Aorta (tissue), 5 donors: ENCODE measurements at regions of chrX and their contacts with region 1.

Region 1: DNA sequence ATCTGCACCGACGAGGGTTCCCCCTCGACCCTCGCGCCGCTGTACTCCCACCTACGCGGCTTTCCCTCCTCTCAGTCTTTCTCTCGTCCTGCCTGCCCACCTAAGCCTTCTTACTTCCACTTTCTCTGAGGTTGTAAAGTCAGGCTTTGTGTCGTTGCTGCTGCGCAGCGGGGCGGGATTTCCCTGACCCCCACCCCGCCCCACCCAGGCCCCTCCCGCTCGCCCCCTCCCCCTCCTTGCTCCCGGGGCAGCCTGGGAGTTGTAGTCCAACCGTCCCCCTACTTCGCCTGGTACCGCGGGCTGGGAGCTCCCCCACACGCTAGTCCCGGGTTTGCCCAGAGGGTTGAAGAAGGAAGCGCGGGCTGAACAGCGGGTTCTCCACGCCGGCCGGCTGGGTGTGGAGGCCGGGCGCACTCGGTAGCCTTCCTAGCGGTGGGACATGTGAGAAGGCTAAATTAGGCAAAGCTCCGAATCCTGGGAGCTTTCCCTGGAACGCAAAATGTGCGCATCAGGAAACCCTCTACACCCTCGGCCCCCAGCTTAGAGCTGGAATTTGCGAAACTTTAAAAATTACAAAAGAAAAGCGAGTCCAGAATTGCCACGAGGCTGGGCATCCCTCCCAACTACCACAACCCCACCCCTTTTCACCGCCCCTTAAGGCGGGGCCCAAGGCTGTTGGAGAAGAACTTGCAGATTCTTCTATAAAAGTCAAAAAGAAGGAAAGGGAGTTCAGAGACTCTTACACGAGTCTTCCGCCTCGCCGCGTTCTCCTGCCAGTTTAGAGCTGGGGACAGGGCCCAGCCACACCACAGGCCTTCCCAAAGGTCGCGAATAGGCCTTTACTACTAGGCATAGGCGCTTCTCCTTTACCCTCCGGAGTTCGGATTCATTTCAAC is at the start of gene ATP11C:
- DNase-seq: peak; percentile 88 to 93
- ATAC-seq: peak; percentile 95
- H3K4me3 ChIP-seq: peak within 1 kb of the TSS; percentile 62 to 77
- H3K27ac ChIP-seq: peak within 1 kb of the TSS; percentile 10 to 97
- H3K4me1 ChIP-seq: peaks cover 0 to 3% of the 10 kb centered on the region in 2 donors
- H3K27me3 ChIP-seq: no peaks in the 10 kb centered on the region
- total RNA-seq, gene ATP11C: 30.2 to 32.1 TPM

Region 2: DNA sequence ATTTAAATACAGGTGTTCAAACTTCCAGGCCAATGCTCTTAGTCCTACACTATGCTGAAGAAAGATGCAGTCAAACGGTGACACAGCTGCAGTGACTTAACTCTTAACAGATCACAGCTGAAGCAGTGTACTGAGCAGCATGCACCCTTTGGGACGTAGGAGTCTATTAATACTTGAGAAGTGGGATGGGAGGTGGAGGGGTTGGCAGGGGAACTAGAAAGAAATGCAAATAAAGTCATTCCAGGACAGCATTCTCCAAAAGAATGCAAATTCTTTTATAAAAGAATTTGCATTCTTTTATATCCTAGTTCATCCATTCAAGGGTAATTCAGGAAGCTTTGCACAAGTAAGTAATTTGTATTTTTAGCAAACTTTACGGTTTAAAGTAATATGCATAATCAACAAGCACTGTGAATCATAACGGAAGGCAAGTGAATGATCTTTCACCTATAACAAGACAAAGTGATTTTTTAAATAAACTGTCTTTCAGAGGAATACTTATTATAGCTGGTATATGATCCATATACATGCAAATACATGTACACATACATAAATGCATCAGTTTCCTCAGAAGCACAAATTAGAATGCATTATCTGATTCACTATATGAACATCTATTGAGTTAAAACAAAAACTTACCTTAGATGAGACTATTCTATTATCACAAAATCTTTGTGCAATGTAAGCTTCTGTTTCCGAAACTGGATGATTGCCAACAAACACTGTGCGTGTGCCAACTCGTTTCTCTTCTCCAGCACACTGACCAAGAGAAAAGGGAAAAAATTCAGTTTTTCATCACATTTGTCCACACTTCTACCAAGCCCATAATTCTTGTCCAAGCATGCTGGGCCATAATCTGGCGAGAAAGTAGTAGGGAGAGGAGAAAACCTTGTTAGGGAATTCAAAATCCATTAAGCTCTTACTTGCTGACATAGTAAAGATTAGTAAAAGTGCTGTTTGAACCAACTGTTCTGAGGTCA is 106.8 kb before region 1 on chrX:
- intact Hi-C with region 1: loop called (anchors 2 to 5 kb)
- DNase-seq: no peak
- ATAC-seq: no peak
- H3K4me3 ChIP-seq: no peak overlapping the region
- H3K27ac ChIP-seq: no peak overlapping the region
- H3K4me1 ChIP-seq: peaks cover 0 to 2% of the 10 kb centered on the region in 2 donors
- H3K27me3 ChIP-seq: no peaks in the 10 kb centered on the region